ENCODE measurements at regions of chr14 and their contacts with region 1.

Region 1: DNA sequence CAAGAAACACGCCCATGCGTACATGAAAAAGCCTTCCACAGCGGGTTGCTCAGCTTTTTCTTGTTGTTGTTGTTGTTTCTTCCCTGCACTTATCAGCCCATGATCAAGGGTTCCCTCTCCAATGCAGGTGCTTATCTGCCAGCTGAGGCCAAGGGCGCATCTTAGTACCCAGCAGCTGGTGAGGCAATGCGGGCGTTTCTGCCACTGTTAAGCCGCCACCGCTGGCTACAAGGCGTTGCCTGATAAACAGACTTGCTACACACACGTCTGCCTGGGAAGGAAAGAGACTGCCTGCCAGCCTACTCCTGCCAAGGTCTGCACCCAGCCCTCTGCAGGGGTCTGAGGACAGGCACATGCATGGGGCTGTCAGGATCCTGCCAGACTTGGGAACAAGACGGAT is 345.9 kb downstream of the BCL11B start:
- DNase-seq: no peak
- H3K4me3 ChIP-seq: no peak overlapping the region
- H3K27ac ChIP-seq: no peak overlapping the region
- H3K4me1 ChIP-seq: no peaks in the 10 kb centered on the region
- H3K27me3 ChIP-seq: no peaks in the 10 kb centered on the region
- CTCF ChIP-seq: no peak
- EP300 ChIP-seq: no peak
- POLR2A ChIP-seq: no peak

Region 2: GRCh38 chr14:98182393-98183055 is 743.6 kb before region 1 on chr14:
- intact Hi-C with region 1: loop called in 1 of 4 experiments (anchors 10 kb)
- DNase-seq: no peak
- H3K4me3 ChIP-seq: no peak overlapping the region
- H3K27ac ChIP-seq: no peak overlapping the region
- H3K4me1 ChIP-seq: no peaks in the 10 kb centered on the region
- H3K27me3 ChIP-seq: no peaks in the 10 kb centered on the region
- CTCF ChIP-seq: no peak
- EP300 ChIP-seq: no peak
- POLR2A ChIP-seq: no peak

Region 3: GRCh38 chr14:99936747-99937474 is 1010.8 kb after region 1 on chr14:
- intact Hi-C with region 1: no loop called
- DNase-seq: no peak
- H3K4me3 ChIP-seq: no peak overlapping the region
- H3K27ac ChIP-seq: no peak overlapping the region
- H3K4me1 ChIP-seq: no peaks in the 10 kb centered on the region
- H3K27me3 ChIP-seq: no peaks in the 10 kb centered on the region
- CTCF ChIP-seq: no peak
- EP300 ChIP-seq: no peak
- POLR2A ChIP-seq: no peak